Calu3 (cell line): ENCODE measurements at regions of chr1 and their contacts with region 1.

Region 1: DNA sequence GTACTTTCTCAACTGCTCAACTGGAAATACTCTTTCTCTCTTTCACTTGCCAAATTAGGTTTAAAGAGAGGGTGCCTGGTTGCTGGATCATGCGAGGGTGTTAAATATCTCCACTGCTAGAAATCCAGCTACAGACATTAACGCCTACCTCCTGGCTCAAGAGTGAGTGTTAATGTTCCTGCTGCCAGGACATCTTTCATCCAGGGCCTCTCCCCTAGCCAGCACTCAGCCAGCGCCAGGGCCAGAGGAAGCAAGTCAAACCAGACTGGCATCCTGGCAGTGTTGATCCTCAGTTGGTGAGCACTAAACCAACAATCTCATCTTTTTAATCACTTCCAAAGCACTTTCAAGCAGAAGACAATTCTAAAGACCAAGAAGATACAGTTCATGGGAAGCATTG is 92.9 kb upstream of the BARHL2 start:
- DNase-seq: no peak
- H3K4me3 Mint-ChIP-seq: no peak overlapping the region
- H3K27ac Mint-ChIP-seq: no peak overlapping the region
- H3K4me1 Mint-ChIP-seq: no peaks in the 10 kb centered on the region
- H3K27me3 Mint-ChIP-seq: no peaks in the 10 kb centered on the region
- CTCF ChIP-seq: no peak

Region 2: DNA sequence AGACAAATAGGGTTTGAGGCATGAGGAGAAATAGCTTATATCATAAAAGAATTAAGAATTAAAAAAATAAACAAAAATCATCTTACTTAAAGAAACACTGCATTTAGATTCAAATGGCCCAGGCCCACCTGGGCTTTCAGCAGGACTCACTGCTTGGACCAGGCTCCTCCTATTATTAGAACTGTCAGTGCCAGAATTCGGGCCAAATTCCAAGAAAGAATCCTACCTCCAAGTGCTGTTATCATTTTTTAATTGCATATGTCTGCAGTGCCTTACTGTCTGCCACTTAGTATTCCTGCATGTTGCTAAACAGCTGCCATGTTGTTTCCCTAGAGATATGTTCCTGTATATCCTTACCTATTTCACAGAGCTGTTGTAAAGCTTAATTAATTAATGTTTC is 204.9 kb before region 1 on chr1:
- CTCF ChIA-PET with region 1: no interaction called
- intact Hi-C with region 1: no loop called
- DNase-seq: no peak
- H3K4me3 Mint-ChIP-seq: no peak overlapping the region
- H3K27ac Mint-ChIP-seq: no peak overlapping the region
- H3K4me1 Mint-ChIP-seq: no peaks in the 10 kb centered on the region
- H3K27me3 Mint-ChIP-seq: no peaks in the 10 kb centered on the region
- CTCF ChIP-seq: no peak

Region 3: GRCh38 chr1:90821793-90822359 is 11.9 kb after region 1 on chr1:
- CTCF ChIA-PET with region 1: no interaction called
- intact Hi-C with region 1: no loop called
- DNase-seq: peak; percentile 3
- H3K4me3 Mint-ChIP-seq: no peak overlapping the region
- H3K27ac Mint-ChIP-seq: no peak overlapping the region
- H3K4me1 Mint-ChIP-seq: no peaks in the 10 kb centered on the region
- H3K27me3 Mint-ChIP-seq: peaks cover 1% of the 10 kb centered on the region
- CTCF ChIP-seq: no peak

Region 4: DNA sequence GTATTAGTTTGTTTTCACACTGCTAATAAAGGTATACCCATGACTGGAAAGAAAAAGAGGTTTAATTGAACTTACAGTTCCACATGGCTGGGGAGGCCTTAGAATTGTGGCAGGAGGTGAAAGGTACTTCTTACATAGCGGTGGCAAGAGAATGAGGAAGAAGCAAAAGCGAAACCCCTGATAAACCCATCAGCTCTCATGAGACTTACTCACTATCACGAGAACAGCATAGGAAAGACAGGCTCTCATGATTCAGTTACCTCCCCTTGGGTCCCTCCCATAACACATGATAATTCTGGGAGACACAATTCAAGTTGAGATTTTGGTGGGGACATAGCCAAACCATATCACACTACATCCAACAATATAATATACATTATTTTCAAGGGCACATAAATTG is 52.8 kb after region 1 on chr1:
- CTCF ChIA-PET with region 1: no interaction called
- intact Hi-C with region 1: loop called (anchors 10 kb)
- DNase-seq: no peak
- H3K4me3 Mint-ChIP-seq: no peak overlapping the region
- H3K27ac Mint-ChIP-seq: no peak overlapping the region
- H3K4me1 Mint-ChIP-seq: no peaks in the 10 kb centered on the region
- H3K27me3 Mint-ChIP-seq: no peaks in the 10 kb centered on the region
- CTCF ChIP-seq: no peak

Region 5: DNA sequence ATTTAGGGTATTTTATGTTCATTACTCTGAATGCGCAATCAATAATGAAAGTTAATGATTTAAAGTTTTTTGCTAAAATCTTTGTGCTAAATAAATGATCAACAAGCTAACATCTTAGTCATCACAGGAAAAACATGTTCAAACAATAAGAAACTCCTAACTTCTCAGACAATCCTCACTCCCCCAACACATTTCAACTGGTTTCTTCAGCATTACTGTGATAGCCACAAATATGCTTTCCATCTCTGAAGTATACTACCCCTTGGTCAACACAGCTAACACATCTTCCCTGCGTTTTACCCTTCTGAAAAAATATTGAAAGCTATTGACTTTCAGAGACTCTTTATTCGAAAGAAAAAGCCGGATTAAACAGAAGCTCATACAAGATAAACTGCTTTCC is 126.1 kb after region 1 on chr1:
- CTCF ChIA-PET with region 1: no interaction called
- intact Hi-C with region 1: loop called (anchors 10 kb)
- DNase-seq: no peak
- H3K4me3 Mint-ChIP-seq: peak overlapping the region; percentile 43
- H3K27ac Mint-ChIP-seq: peak overlapping the region; percentile 74
- H3K4me1 Mint-ChIP-seq: peaks cover 30% of the 10 kb centered on the region
- H3K27me3 Mint-ChIP-seq: no peaks in the 10 kb centered on the region
- CTCF ChIP-seq: no peak

Region 6: GRCh38 chr1:90959352-90960206 is 149.6 kb after region 1 on chr1:
- CTCF ChIA-PET with region 1: no interaction called
- intact Hi-C with region 1: no loop called
- DNase-seq: no peak
- H3K4me3 Mint-ChIP-seq: no peak overlapping the region
- H3K27ac Mint-ChIP-seq: peak overlapping the region; percentile 63
- H3K4me1 Mint-ChIP-seq: peaks cover 66% of the 10 kb centered on the region
- H3K27me3 Mint-ChIP-seq: no peaks in the 10 kb centered on the region
- CTCF ChIP-seq: no peak